Ovary (tissue), 10 donors: ENCODE measurements at regions of chr18 and their contacts with region 1.

Region 1: GRCh38 chr18:63141778-63142176 is 177.8 kb downstream of the BCL2 start:
- DNase-seq: no peak
- H3K4me3 ChIP-seq: no peak overlapping the region
- H3K27ac ChIP-seq: no peak overlapping the region
- H3K4me1 ChIP-seq: peaks cover 15% of the 10 kb centered on the region
- H3K27me3 ChIP-seq: no peaks in the 10 kb centered on the region
- CTCF ChIP-seq: no peak
- EP300 ChIP-seq: no peak
- POLR2A ChIP-seq: no peak

Region 2: GRCh38 chr18:61141691-61142090 is 2000.1 kb before region 1 on chr18:
- intact Hi-C with region 1: no loop called
- DNase-seq: no peak
- H3K4me3 ChIP-seq: no peak overlapping the region
- H3K27ac ChIP-seq: no peak overlapping the region
- H3K4me1 ChIP-seq: no peaks in the 10 kb centered on the region
- H3K27me3 ChIP-seq: no peaks in the 10 kb centered on the region
- CTCF ChIP-seq: no peak
- EP300 ChIP-seq: no peak
- POLR2A ChIP-seq: no peak

Region 3: DNA sequence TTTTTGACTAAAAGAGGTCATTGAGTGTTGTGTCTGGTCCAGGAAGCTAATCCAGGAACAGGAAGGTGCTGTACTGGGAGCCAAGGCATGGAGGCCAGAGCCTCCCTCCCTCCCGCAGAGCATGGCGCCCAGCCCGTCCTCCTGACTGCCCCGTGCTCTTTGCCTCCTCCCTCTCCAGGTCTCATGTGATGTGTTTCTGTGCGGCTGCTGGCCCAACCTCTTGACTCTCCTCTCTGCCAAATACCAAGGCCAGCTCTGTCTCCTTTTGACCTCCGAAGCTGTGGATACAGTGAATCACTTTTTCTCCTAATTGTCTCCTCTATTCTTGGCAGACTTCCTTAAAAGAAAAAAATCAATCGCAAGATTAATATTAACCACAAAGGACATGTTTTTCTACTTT is 142.4 kb before region 1 on chr18:
- intact Hi-C with region 1: no loop called
- DNase-seq: peak; percentile 79 to 90 (median 81)
- H3K4me3 ChIP-seq: no peak overlapping the region
- H3K27ac ChIP-seq: no peak overlapping the region
- H3K4me1 ChIP-seq: peaks cover 5% of the 10 kb centered on the region
- H3K27me3 ChIP-seq: no peaks in the 10 kb centered on the region
- CTCF ChIP-seq: no peak
- EP300 ChIP-seq: no peak
- POLR2A ChIP-seq: no peak

Region 4: DNA sequence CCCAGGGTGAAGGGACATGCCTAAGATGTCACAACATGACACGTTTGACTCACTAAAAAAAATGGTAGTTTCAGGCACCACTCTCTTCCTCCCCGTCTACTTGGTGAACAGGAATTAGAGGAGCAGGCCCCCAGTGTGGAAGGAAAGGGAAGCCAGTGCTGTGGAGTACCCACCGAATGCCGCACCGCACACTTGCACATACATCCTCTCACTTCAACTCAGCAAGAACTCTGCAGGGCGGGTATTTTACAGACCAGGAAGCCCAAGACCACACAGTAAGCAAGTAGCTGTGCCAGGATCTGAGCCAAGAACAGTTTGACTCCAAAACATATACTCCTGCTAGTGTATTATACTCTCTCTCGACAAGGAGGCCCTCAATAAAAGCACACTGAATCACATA is 108.0 kb after region 1 on chr18:
- intact Hi-C with region 1: loop called in 1 of 4 experiments (anchors 10 kb)
- DNase-seq: no peak
- H3K4me3 ChIP-seq: no peak overlapping the region
- H3K27ac ChIP-seq: no peak overlapping the region
- H3K4me1 ChIP-seq: peaks cover 25% of the 10 kb centered on the region
- H3K27me3 ChIP-seq: no peaks in the 10 kb centered on the region
- CTCF ChIP-seq: no peak
- EP300 ChIP-seq: no peak
- POLR2A ChIP-seq: no peak

Region 5: DNA sequence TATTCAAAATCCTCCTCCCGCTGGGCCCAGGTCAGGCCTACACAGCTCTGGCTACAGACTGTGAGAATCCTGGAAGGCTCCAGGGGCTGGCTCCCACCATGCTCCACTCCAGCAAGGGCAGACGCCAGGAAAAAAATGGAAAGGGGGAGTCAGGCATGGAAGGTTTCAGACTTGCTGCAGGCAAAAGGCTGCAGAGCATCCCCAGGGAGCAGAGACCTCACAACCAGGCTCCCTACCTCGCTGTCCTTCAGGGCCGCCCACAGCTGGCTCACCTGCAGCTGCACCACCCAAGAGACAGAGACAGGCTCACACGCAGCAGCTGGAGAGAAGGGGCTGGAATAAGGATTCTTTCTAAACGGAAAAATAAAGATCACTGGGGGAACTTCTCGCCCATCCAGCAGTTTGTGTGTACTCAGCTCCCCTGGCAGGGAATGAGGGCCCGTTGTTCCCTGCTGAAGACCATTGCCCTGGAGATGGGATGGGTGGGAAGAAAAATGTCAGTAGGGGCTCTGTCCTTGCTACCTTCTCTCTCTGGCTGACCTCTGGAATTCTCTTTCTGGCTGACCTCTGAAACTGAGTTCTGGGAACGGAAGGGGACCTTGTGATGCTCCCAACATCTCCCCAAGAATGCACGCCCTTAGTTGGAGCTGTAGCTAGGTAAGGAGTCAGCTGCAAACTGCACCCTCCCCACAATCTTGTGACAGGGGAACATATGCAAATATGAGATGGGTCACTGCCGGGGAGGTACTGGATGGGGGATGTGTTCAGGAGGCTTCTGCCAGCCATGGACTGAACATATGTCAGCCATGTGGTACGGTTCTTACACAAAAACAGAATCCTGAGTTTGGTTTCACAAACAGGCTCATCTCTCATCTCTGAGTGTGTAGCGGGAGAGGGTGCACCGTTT is 143.3 kb after region 1 on chr18:
- intact Hi-C with region 1: loop called in 1 of 4 experiments (anchors 10 kb)
- DNase-seq: no peak
- H3K4me3 ChIP-seq: no peak overlapping the region
- H3K27ac ChIP-seq: peak overlapping the region in 1 of 2 donors; percentile 45
- H3K4me1 ChIP-seq: peaks cover 37% of the 10 kb centered on the region
- H3K27me3 ChIP-seq: no peaks in the 10 kb centered on the region
- CTCF ChIP-seq: no peak
- EP300 ChIP-seq: no peak
- POLR2A ChIP-seq: no peak